Activated CD4-positive, alpha-beta memory T cell treated with anti-CD3 and anti-CD28 coated beads for 36 hours (primary cell): ENCODE measurements at regions of chr3 and their contacts with region 1.

Region 1: GRCh38 chr3:153138276-153139210 is 23.5 kb upstream of the RAP2B start:
- DNase-seq: peak; percentile 91
- H3K4me3 Mint-ChIP-seq: no peak overlapping the region
- H3K27ac Mint-ChIP-seq: peak overlapping the region; percentile 73
- H3K4me1 Mint-ChIP-seq: peaks cover 35% of the 10 kb centered on the region
- H3K27me3 Mint-ChIP-seq: peaks cover 5% of the 10 kb centered on the region

Region 2: DNA sequence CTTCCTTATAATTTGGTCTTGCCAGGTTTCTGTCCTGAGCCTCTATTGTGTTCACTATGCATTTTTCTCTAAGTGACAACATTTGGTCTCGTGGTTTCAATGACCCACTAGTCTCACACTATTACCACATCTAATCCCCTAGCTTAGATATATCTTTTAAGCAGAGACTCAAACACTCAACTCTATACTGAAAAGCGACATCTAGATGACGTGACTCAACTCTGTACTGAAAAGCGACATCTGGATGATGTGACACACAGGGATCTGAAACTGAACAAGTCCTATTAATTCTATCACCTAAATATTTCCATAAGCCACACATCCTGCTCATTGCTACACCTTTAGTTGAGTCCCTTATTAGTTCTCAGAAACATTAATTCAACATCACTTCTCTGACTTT is 1011.5 kb before region 1 on chr3:
- CTCF ChIA-PET with region 1: no interaction called
- POLR2A ChIA-PET with region 1: no interaction called
- intact Hi-C with region 1: loop called (anchors 10 kb)
- DNase-seq: peak; percentile 29
- H3K4me3 Mint-ChIP-seq: no peak overlapping the region
- H3K27ac Mint-ChIP-seq: no peak overlapping the region
- H3K4me1 Mint-ChIP-seq: peaks cover 20% of the 10 kb centered on the region
- H3K27me3 Mint-ChIP-seq: no peaks in the 10 kb centered on the region

Region 3: DNA sequence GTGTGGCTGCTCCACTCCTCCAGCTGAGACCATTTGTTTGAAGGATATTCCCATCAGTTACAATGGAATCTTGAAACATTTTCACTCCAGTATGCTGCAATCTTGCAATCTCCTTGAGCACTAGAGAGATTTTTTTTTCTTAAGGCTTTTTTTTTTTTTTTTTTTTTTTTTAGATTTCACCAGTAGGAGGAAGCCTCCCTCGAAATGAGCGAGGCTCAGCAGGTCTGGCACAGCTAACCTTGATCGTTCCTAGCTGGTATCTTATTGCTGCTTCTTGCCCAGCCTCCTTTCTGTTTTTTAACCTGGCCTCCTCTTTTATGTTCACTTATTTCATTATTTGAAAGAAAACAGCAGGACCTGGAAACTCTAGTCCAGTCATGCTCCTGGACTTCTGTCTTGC is 71.6 kb after region 1 on chr3:
- CTCF ChIA-PET with region 1: no interaction called
- POLR2A ChIA-PET with region 1: no interaction called
- intact Hi-C with region 1: loop called (anchors 1 kb)
- DNase-seq: no peak
- H3K4me3 Mint-ChIP-seq: no peak overlapping the region
- H3K27ac Mint-ChIP-seq: no peak overlapping the region
- H3K4me1 Mint-ChIP-seq: peaks cover 31% of the 10 kb centered on the region
- H3K27me3 Mint-ChIP-seq: no peaks in the 10 kb centered on the region

Region 4: GRCh38 chr3:153221748-153222162 is 83.2 kb after region 1 on chr3:
- CTCF ChIA-PET with region 1: no interaction called
- POLR2A ChIA-PET with region 1: interaction called, 3 read pairs
- intact Hi-C with region 1: loop called (anchors 1 kb)
- DNase-seq: peak; percentile 81
- H3K4me3 Mint-ChIP-seq: peak overlapping the region; percentile 72
- H3K27ac Mint-ChIP-seq: peak overlapping the region; percentile 90
- H3K4me1 Mint-ChIP-seq: peaks cover 54% of the 10 kb centered on the region
- H3K27me3 Mint-ChIP-seq: no peaks in the 10 kb centered on the region

Region 5: GRCh38 chr3:153285194-153285641 is 146.7 kb after region 1 on chr3:
- CTCF ChIA-PET with region 1: no interaction called
- POLR2A ChIA-PET with region 1: no interaction called
- intact Hi-C with region 1: loop called (anchors 1 kb)
- DNase-seq: no peak
- H3K4me3 Mint-ChIP-seq: no peak overlapping the region
- H3K27ac Mint-ChIP-seq: peak overlapping the region; percentile 60
- H3K4me1 Mint-ChIP-seq: peaks cover 48% of the 10 kb centered on the region
- H3K27me3 Mint-ChIP-seq: no peaks in the 10 kb centered on the region